ENCODE measurements at regions of chr1 and their contacts with region 1.

Region 1: GRCh38 chr1:1013105-1013921 is at the start of gene ISG15:
- DNase-seq: peak; percentile 92
- H3K4me3 Mint-ChIP-seq: peak within 1 kb of the TSS; percentile 86
- H3K27ac Mint-ChIP-seq: peak within 1 kb of the TSS; percentile 90
- H3K4me1 Mint-ChIP-seq: peaks cover 25% of the 10 kb centered on the region
- H3K27me3 Mint-ChIP-seq: peaks cover 5% of the 10 kb centered on the region
- total RNA-seq, gene ISG15: 96.9 to 108 TPM

Region 2: GRCh38 chr1:1001461-1002204 is 11.7 kb before region 1 on chr1:
- CTCF ChIA-PET with region 1: interaction called, 33 read pairs
- POLR2A ChIA-PET with region 1: interaction called, 4 read pairs
- intact Hi-C with region 1: no loop called
- DNase-seq: peak; percentile 77
- H3K4me3 Mint-ChIP-seq: no peak overlapping the region
- H3K27ac Mint-ChIP-seq: no peak overlapping the region
- H3K4me1 Mint-ChIP-seq: peaks cover 13% of the 10 kb centered on the region
- H3K27me3 Mint-ChIP-seq: peaks cover 37% of the 10 kb centered on the region

Measured in activated CD4-positive, alpha-beta memory T cell treated with anti-CD3 and anti-CD28 coated beads for 36 hours (primary cell).